ENCODE measurements at regions of chr11 and their contacts with region 1.

Region 1: GRCh38 chr11:22829231-22830081 is at the start of gene SVIP:
- DNase-seq: peak; percentile 97 to 99 (median 98)
- H3K4me3 ChIP-seq: peak within 1 kb of the TSS; percentile 69 to 93 (median 88)
- H3K27ac ChIP-seq: peak within 1 kb of the TSS; percentile 66 to 81
- H3K4me1 ChIP-seq: peaks cover 5 to 26% (median 14%) of the 10 kb centered on the region in 4 experiments
- H3K27me3 ChIP-seq: no peaks in the 10 kb centered on the region

Region 2: GRCh38 chr11:22875869-22876473 is 46.5 kb after region 1 on chr11:
- CTCF ChIA-PET with region 1: interaction called, 13 read pairs
- POLR2A ChIA-PET with region 1: no interaction called
- DNase-seq: peak; percentile 84 to 91 (median 88)
- H3K4me3 ChIP-seq: no peak overlapping the region
- H3K27ac ChIP-seq: no peak overlapping the region
- H3K4me1 ChIP-seq: no peaks in the 10 kb centered on the region
- H3K27me3 ChIP-seq: no peaks in the 10 kb centered on the region

Region 3: GRCh38 chr11:22903782-22904181 is 74.3 kb after region 1 on chr11:
- CTCF ChIA-PET with region 1: no interaction called
- POLR2A ChIA-PET with region 1: no interaction called
- DNase-seq: no peak
- H3K4me3 ChIP-seq: no peak overlapping the region
- H3K27ac ChIP-seq: no peak overlapping the region
- H3K4me1 ChIP-seq: no peaks in the 10 kb centered on the region
- H3K27me3 ChIP-seq: no peaks in the 10 kb centered on the region

Measured in common myeloid progenitor, CD34-positive (primary cell).